ENCODE measurements at regions of chr6 and their contacts with region 1.

Region 1: GRCh38 chr6:8983188-8983688 is 547.9 kb upstream of the SLC35B3 start:
- DNase-seq: peak in 1 of 2 experiments; percentile 76
- H3K4me3 ChIP-seq: no peak overlapping the region
- H3K27ac ChIP-seq: no peak overlapping the region
- H3K4me1 ChIP-seq: no peaks in the 10 kb centered on the region
- H3K27me3 ChIP-seq: no peaks in the 10 kb centered on the region
- CTCF ChIP-seq: peak; percentile 86

Region 2: GRCh38 chr6:8539446-8539845 is 443.8 kb before region 1 on chr6:
- CTCF ChIA-PET with region 1: no interaction called
- POLR2A ChIA-PET with region 1: no interaction called
- intact Hi-C with region 1: loop called (anchors 5 kb)
- DNase-seq: no peak
- H3K4me3 ChIP-seq: no peak overlapping the region
- H3K27ac ChIP-seq: no peak overlapping the region
- H3K4me1 ChIP-seq: no peaks in the 10 kb centered on the region
- H3K27me3 ChIP-seq: no peaks in the 10 kb centered on the region
- CTCF ChIP-seq: peak; percentile 51

Region 3: GRCh38 chr6:9250852-9251251 is 267.6 kb after region 1 on chr6:
- CTCF ChIA-PET with region 1: no interaction called
- POLR2A ChIA-PET with region 1: no interaction called
- intact Hi-C with region 1: loop called (anchors 2 kb)
- DNase-seq: peak; percentile 43 to 67
- H3K4me3 ChIP-seq: no peak overlapping the region
- H3K27ac ChIP-seq: no peak overlapping the region
- H3K4me1 ChIP-seq: no peaks in the 10 kb centered on the region
- H3K27me3 ChIP-seq: no peaks in the 10 kb centered on the region
- CTCF ChIP-seq: peak; percentile 61

Region 4: GRCh38 chr6:9851541-9852380 is 868.5 kb after region 1 on chr6:
- CTCF ChIA-PET with region 1: no interaction called
- POLR2A ChIA-PET with region 1: no interaction called
- intact Hi-C with region 1: loop called (anchors 1 kb)
- DNase-seq: peak; percentile 55 to 57
- H3K4me3 ChIP-seq: no peak overlapping the region
- H3K27ac ChIP-seq: no peak overlapping the region
- H3K4me1 ChIP-seq: no peaks in the 10 kb centered on the region
- H3K27me3 ChIP-seq: no peaks in the 10 kb centered on the region
- CTCF ChIP-seq: peak; percentile 36; the same call in 1 of the 2 replicates

Region 5: GRCh38 chr6:10248378-10248891 is 1265.2 kb after region 1 on chr6:
- CTCF ChIA-PET with region 1: interaction called, 11 read pairs
- POLR2A ChIA-PET with region 1: no interaction called
- intact Hi-C with region 1: no loop called
- DNase-seq: peak; percentile 55 to 82
- H3K4me3 ChIP-seq: no peak overlapping the region
- H3K27ac ChIP-seq: no peak overlapping the region
- H3K4me1 ChIP-seq: 0 out of 2 replicates have a peak, but pooled peaks cover 7% of the 10 kb centered on the region
- H3K27me3 ChIP-seq: no peaks in the 10 kb centered on the region
- CTCF ChIP-seq: no peak

Measured in PC-9 (cell line).